Vagina (tissue), 2 donors: ENCODE measurements at regions of chr18 and their contacts with region 1.

Region 1: GRCh38 chr18:11980555-11981382 is 538 bp upstream of the IMPA2 start:
- DNase-seq: peak in 1 of 2 donors; percentile 99
- H3K4me3 ChIP-seq: peak overlapping the region; percentile 91
- H3K27ac ChIP-seq: peak overlapping the region; percentile 97
- H3K4me1 ChIP-seq: peaks cover 35% of the 10 kb centered on the region
- H3K27me3 ChIP-seq: no peaks in the 10 kb centered on the region
- CTCF ChIP-seq: no peak
- POLR2A ChIP-seq: peak in 1 of 2 donors; percentile 80

Region 2: GRCh38 chr18:11908182-11909060 is 72.3 kb before region 1 on chr18 and contains the start of gene MPPE1:
- intact Hi-C with region 1: loop called (anchors 2 kb)
- DNase-seq: no peak
- H3K4me3 ChIP-seq: peak within 1 kb of the TSS; percentile 75 to 76
- H3K27ac ChIP-seq: peak within 1 kb of the TSS; percentile 95
- H3K4me1 ChIP-seq: peaks cover 26% of the 10 kb centered on the region
- H3K27me3 ChIP-seq: no peaks in the 10 kb centered on the region
- CTCF ChIP-seq: no peak
- POLR2A ChIP-seq: peak in 1 of 2 donors; percentile 77
- total RNA-seq, gene MPPE1: 24.6 TPM

Region 3: GRCh38 chr18:11947214-11948191 is 33.3 kb before region 1 on chr18:
- intact Hi-C with region 1: loop called (anchors 5 kb)
- DNase-seq: peak in 1 of 2 donors; percentile 99
- H3K4me3 ChIP-seq: peak overlapping the region; percentile 50 to 51
- H3K27ac ChIP-seq: peak overlapping the region; percentile 93
- H3K4me1 ChIP-seq: peaks cover 50% of the 10 kb centered on the region
- H3K27me3 ChIP-seq: no peaks in the 10 kb centered on the region
- CTCF ChIP-seq: no peak
- POLR2A ChIP-seq: peak in 1 of 2 donors; percentile 67

Region 4: DNA sequence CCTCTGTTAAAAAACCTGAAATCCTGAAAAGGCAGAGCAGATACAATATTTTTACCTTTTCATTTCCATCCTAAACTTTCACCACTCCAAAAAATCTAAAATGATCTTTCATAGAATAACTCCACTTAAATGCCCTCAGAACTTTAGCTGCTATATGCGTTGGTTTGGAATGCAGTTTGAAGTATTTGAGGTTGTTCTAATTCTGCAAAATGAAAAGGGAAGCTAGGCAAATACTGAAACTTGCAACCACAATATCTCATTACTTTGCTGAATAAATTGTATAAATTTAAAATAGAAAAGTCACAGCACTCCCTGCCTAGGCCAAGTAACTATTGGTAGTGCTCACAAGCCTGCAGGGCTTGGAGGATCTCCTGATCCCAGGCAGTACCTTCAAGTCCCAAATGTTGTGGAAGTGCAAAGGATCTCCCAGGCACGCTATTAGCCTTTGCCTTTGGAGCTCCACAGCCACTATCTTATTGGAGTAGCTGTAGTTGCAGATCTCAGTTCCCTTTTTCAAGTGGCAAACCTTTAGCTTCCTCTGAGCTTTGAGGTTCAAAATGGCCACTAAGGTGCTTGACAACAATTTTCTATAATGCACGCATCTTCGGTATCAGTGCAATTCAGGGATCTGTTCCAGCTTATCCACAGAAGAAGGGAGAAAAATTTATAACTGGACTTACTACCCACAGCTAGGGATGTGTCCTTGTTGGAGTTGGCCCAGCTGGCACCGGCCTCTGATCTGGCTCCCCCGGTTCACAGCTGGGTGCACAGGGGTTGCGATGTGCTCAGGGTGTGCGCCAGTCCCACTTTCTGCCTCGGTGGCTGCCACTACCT is 69.4 kb after region 1 on chr18:
- intact Hi-C with region 1: no loop called
- DNase-seq: no peak
- H3K4me3 ChIP-seq: no peak overlapping the region
- H3K27ac ChIP-seq: no peak overlapping the region
- H3K4me1 ChIP-seq: no peaks in the 10 kb centered on the region
- H3K27me3 ChIP-seq: no peaks in the 10 kb centered on the region
- CTCF ChIP-seq: no peak
- POLR2A ChIP-seq: no peak